Aorta (tissue), 5 donors: ENCODE measurements at regions of chrX and their contacts with region 1.

Region 1: GRCh38 chrX:45596188-45596808 is 395.6 kb upstream of the DIPK2B start:
- DNase-seq: no peak
- ATAC-seq: no peak
- H3K4me3 ChIP-seq: no peak overlapping the region
- H3K27ac ChIP-seq: no peak overlapping the region
- H3K4me1 ChIP-seq: no peaks in the 10 kb centered on the region
- H3K27me3 ChIP-seq: no peaks in the 10 kb centered on the region

Region 2: GRCh38 chrX:45485686-45486085 is 110.6 kb before region 1 on chrX:
- intact Hi-C with region 1: no loop called
- DNase-seq: no peak
- ATAC-seq: no peak
- H3K4me3 ChIP-seq: no peak overlapping the region
- H3K27ac ChIP-seq: no peak overlapping the region
- H3K4me1 ChIP-seq: no peaks in the 10 kb centered on the region
- H3K27me3 ChIP-seq: no peaks in the 10 kb centered on the region

Region 3: GRCh38 chrX:45743081-45743533 is 146.8 kb after region 1 on chrX:
- intact Hi-C with region 1: loop called in 1 of 2 experiments (anchors 10 kb)
- DNase-seq: no peak
- ATAC-seq: no peak
- H3K4me3 ChIP-seq: no peak overlapping the region
- H3K27ac ChIP-seq: no peak overlapping the region
- H3K4me1 ChIP-seq: no peaks in the 10 kb centered on the region
- H3K27me3 ChIP-seq: peaks cover 0 to 2% of the 10 kb centered on the region in 2 donors

Region 4: GRCh38 chrX:46433892-46434291 is 837.6 kb after region 1 on chrX:
- intact Hi-C with region 1: no loop called
- DNase-seq: no peak
- ATAC-seq: no peak
- H3K4me3 ChIP-seq: no peak overlapping the region
- H3K27ac ChIP-seq: no peak overlapping the region
- H3K4me1 ChIP-seq: no peaks in the 10 kb centered on the region
- H3K27me3 ChIP-seq: no peaks in the 10 kb centered on the region